Mammary epithelial cell (primary cell): ENCODE measurements at regions of chr2 and their contacts with region 1.

Region 1: GRCh38 chr2:226799181-226799975 is at the start of gene IRS1:
- DNase-seq: peak; percentile 71
- H3K4me3 ChIP-seq: peak within 1 kb of the TSS; percentile 82 to 92 (median 85)
- H3K27ac ChIP-seq: peak within 1 kb of the TSS; percentile 62
- H3K4me1 ChIP-seq: peaks cover 39% of the 10 kb centered on the region
- H3K27me3 ChIP-seq: no peaks in the 10 kb centered on the region
- CTCF ChIP-seq: peak in 1 of 2 donors; percentile 14
- total RNA-seq, gene IRS1: 25.8 to 36.2 TPM

Region 2: DNA sequence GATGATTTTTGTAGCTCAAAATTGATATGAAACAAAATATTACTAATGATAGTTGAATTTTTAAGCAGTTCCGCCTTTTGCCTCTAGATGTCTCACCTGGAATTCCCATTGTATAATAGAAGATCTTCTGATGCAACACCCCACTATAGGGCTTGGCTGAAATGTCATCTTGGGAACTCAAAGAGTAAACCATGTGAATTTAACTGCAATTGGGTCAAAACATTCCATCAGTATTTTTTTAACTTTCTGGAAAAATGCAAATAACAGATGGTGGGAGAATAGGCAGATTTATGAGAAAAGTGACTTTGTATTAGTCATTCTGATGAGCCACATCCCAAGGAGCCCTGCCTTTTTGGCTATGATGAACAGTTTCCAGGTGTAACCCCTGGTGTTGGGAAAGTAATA is 909.9 kb before region 1 on chr2:
- CTCF ChIA-PET with region 1: no interaction called
- dilution Hi-C with region 1: no loop called
- in situ Hi-C with region 1: loop called (anchors 5 to 25 kb)
- intact Hi-C with region 1: loop called (anchors 1 kb)
- DNase-seq: peak; percentile 73
- H3K4me3 ChIP-seq: no peak overlapping the region
- H3K27ac ChIP-seq: peak overlapping the region; percentile 45
- H3K4me1 ChIP-seq: peaks cover 4% of the 10 kb centered on the region
- H3K27me3 ChIP-seq: no peaks in the 10 kb centered on the region
- CTCF ChIP-seq: peak; percentile 60 to 80

Region 3: GRCh38 chr2:226137201-226137811 is 662.1 kb before region 1 on chr2:
- CTCF ChIA-PET with region 1: no interaction called
- dilution Hi-C with region 1: no loop called
- in situ Hi-C with region 1: loop called in 1 of 2 experiments (anchors 10 kb)
- intact Hi-C with region 1: loop called (anchors 5 kb)
- DNase-seq: peak; percentile 99
- H3K4me3 ChIP-seq: peak overlapping the region in 2 of 3 experiments; percentile 6 to 16
- H3K27ac ChIP-seq: peak overlapping the region; percentile 95
- H3K4me1 ChIP-seq: peaks cover 14% of the 10 kb centered on the region
- H3K27me3 ChIP-seq: no peaks in the 10 kb centered on the region
- CTCF ChIP-seq: no peak

Region 4: DNA sequence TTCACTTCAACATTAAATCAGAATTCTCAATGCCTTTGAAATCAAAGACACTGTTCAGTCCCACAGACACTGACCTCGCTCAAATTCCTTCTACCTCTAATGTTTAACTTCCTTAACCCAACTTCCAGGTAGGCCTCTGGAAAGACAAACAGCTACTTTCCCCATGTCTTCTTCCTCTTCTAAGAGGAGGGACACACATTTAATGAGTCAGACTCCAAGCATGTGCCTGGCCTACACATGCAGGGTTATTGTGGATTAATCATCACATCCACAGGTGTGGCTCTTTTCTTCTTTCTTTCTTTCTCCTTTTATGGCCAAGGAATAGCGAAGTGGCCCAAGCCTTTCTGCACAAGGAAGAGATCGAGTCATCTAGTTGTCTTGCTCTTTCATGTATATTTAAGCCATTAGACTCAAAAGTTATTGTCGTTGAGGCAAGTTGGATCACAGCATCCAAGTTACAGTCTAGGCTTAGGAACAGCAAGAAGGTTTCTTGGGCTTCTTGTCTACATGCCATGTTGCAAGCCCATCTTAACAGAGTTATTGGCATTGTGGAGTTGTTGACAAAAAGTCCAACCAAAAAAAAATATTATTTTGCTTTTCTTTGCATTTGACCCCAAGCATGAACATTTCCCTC is 387.5 kb before region 1 on chr2:
- CTCF ChIA-PET with region 1: no interaction called
- dilution Hi-C with region 1: no loop called
- in situ Hi-C with region 1: no loop called
- intact Hi-C with region 1: loop called (anchors 5 kb)
- DNase-seq: peak; percentile 93
- H3K4me3 ChIP-seq: no peak overlapping the region
- H3K27ac ChIP-seq: peak overlapping the region; percentile 81
- H3K4me1 ChIP-seq: peaks cover 19% of the 10 kb centered on the region
- H3K27me3 ChIP-seq: no peaks in the 10 kb centered on the region
- CTCF ChIP-seq: no peak

Region 5: DNA sequence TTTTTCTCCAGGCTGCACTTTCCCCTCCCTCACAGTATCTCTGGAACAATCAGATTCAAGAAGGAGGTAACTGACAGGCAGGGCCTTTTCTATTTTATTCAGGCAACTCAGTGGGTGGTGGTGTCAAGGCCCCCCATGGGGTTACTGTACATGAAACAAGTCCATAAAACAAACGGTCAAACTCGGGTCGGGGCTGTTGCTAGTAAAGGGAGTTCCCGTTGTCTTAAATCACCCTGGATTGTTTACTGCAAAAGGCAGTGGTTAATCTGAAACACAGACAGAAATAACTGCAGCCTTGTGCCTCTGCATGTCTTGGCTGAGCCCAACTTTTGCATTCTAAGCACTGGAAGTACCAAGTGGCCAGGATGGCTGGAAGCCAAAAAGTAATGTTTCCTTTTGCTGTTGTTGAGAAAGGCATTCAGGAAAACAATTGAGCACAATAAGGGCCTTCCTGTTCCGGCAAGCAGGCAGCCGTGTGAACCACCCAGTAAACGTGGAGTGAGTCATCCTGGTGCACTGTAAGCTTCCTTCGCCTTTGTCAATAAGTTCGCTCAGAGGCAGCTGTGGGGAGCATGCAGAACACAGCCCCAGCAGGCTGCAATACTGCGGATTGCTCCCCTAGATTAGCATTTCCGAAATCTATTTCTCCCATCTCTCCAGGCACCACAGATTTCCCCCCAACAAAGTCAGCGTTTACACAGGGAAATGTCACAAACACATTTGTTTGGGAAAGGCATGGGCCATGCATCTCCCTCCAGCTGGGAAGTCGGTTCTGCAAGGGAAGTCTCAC is 149.3 kb before region 1 on chr2:
- CTCF ChIA-PET with region 1: no interaction called
- dilution Hi-C with region 1: no loop called
- in situ Hi-C with region 1: no loop called
- intact Hi-C with region 1: loop called (anchors 2 kb)
- DNase-seq: peak; percentile 98
- H3K4me3 ChIP-seq: no peak overlapping the region
- H3K27ac ChIP-seq: peak overlapping the region; percentile 92
- H3K4me1 ChIP-seq: peaks cover 45% of the 10 kb centered on the region
- H3K27me3 ChIP-seq: no peaks in the 10 kb centered on the region
- CTCF ChIP-seq: no peak